ENCODE measurements at regions of chr7 and their contacts with region 1.

Region 1: GRCh38 chr7:135965602-135966001 is 11.6 kb downstream of the MTPN start:
- DNase-seq: no peak
- ATAC-seq: no peak
- H3K4me3 ChIP-seq: no peak overlapping the region
- H3K27ac ChIP-seq: no peak overlapping the region
- H3K4me1 ChIP-seq: peaks cover 0 to 13% of the 10 kb centered on the region in 2 experiments; a peak in 4 of 5 replicates
- H3K27me3 ChIP-seq: no peaks in the 10 kb centered on the region
- CTCF ChIP-seq: no peak
- EP300 ChIP-seq: no peak
- POLR2A ChIP-seq: no peak
- RAD21 ChIP-seq: no peak

Region 2: GRCh38 chr7:135950972-135951371 is 14.6 kb before region 1 on chr7:
- CTCF ChIA-PET with region 1: no interaction called
- POLR2A ChIA-PET with region 1: interaction called, 11 read pairs
- in situ Hi-C with region 1: no loop called
- intact Hi-C with region 1: no loop called
- DNase-seq: no peak
- ATAC-seq: peak; percentile 40; the same call in 2 of the 3 replicates
- H3K4me3 ChIP-seq: no peak overlapping the region
- H3K27ac ChIP-seq: no peak overlapping the region
- H3K4me1 ChIP-seq: peaks cover 0 to 17% of the 10 kb centered on the region in 2 experiments; a peak in 3 of 5 replicates
- H3K27me3 ChIP-seq: no peaks in the 10 kb centered on the region
- CTCF ChIP-seq: no peak
- EP300 ChIP-seq: peak; percentile 15; the same call in 1 of the 2 replicates
- POLR2A ChIP-seq: no peak
- RAD21 ChIP-seq: no peak

Region 3: GRCh38 chr7:135977007-135977741 is 11.6 kb after region 1 on chr7 and contains the start of gene MTPN:
- CTCF ChIA-PET with region 1: no interaction called
- POLR2A ChIA-PET with region 1: interaction called, 14 read pairs
- in situ Hi-C with region 1: no loop called
- intact Hi-C with region 1: no loop called
- DNase-seq: peak; percentile 99 to 100 (median 99)
- ATAC-seq: peak; percentile 90
- H3K4me3 ChIP-seq: peak within 1 kb of the TSS; percentile 83
- H3K27ac ChIP-seq: peak within 1 kb of the TSS; percentile 78
- H3K4me1 ChIP-seq: peaks cover 19 to 61% of the 10 kb centered on the region in 2 experiments
- H3K27me3 ChIP-seq: no peaks in the 10 kb centered on the region
- CTCF ChIP-seq: no peak; a peak in 1 of 6 replicates
- EP300 ChIP-seq: no peak; the same call in 1 of the 2 replicates
- POLR2A ChIP-seq: peak; percentile 94
- RAD21 ChIP-seq: no peak; a peak in 1 of 4 replicates
- polyA plus RNA-seq, gene MTPN: 68.5 to 68.6 TPM

Region 4: GRCh38 chr7:136114966-136115762 is 149.6 kb after region 1 on chr7:
- CTCF ChIA-PET with region 1: no interaction called
- POLR2A ChIA-PET with region 1: no interaction called
- in situ Hi-C with region 1: no loop called
- intact Hi-C with region 1: no loop called
- DNase-seq: peak; percentile 77 to 90 (median 82)
- ATAC-seq: peak; percentile 99
- H3K4me3 ChIP-seq: no peak overlapping the region
- H3K27ac ChIP-seq: no peak overlapping the region
- H3K4me1 ChIP-seq: peaks cover 0 to 25% of the 10 kb centered on the region in 2 experiments; a peak in 3 of 5 replicates
- H3K27me3 ChIP-seq: no peaks in the 10 kb centered on the region
- CTCF ChIP-seq: peak; percentile 89 to 95 (median 93)
- EP300 ChIP-seq: peak; percentile 47
- POLR2A ChIP-seq: no peak
- RAD21 ChIP-seq: peak; percentile 71 to 83

Measured in K562 (cell line).